CD4-positive, alpha-beta T cell (primary cell): ENCODE measurements at regions of chr3 and their contacts with region 1.

Region 1: GRCh38 chr3:47009225-47010110 is 30.0 kb downstream of the NBEAL2 start:
- DNase-seq: peak; percentile 30 to 85 (median 70)
- ATAC-seq: peak; percentile 88
- H3K4me3 ChIP-seq: peak overlapping the region; percentile 51
- H3K4me3 Mint-ChIP-seq: peak overlapping the region; percentile 71
- H3K27ac ChIP-seq: peak overlapping the region in 1 of 2 donors; percentile 50
- H3K27ac Mint-ChIP-seq: peak overlapping the region; percentile 59
- H3K4me1 ChIP-seq: peaks cover 10% of the 10 kb centered on the region
- H3K4me1 Mint-ChIP-seq: peaks cover 9% of the 10 kb centered on the region
- H3K27me3 ChIP-seq: no peaks in the 10 kb centered on the region
- H3K27me3 Mint-ChIP-seq: no peaks in the 10 kb centered on the region
- CTCF ChIP-seq: no peak

Region 2: DNA sequence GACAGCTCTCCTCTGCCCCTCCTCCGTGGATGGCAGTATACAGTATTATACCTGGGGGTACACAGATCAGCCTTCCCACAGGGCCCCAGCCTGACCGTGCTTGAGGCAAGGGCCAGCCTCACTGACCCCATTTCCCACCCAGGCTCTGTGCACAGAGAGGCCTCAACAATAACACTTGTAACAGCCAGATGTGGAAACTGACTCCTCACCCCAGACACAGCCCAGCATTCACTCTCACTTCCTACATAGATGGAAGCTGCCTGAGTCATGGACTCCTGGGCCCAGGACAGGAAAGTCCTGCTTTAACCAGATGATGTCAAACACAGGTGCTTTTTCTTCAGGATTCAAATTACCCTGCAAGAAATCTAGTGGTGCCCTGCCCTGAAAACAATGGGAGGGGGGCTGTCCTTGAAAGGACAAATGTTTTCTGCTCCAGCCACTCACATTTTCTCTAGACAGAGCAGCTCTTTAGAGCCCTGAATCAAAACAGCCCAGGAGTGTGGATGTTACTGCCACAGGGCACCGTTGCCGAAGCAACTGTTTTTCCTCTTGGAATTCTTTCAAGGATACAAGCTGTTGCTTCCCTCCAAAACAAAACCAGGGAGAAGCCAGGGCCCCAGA is 49.3 kb before region 1 on chr3:
- CTCF ChIA-PET with region 1: no interaction called
- POLR2A ChIA-PET with region 1: no interaction called
- intact Hi-C with region 1: loop called in 1 of 2 experiments (anchors 5 kb)
- DNase-seq: peak in 2 of 14 experiments; percentile 52
- ATAC-seq: no peak
- H3K4me3 ChIP-seq: no peak overlapping the region
- H3K4me3 Mint-ChIP-seq: peak overlapping the region; percentile 7
- H3K27ac ChIP-seq: no peak overlapping the region
- H3K27ac Mint-ChIP-seq: peak overlapping the region; percentile 78
- H3K4me1 ChIP-seq: peaks cover 59% of the 10 kb centered on the region
- H3K4me1 Mint-ChIP-seq: peaks cover 78% of the 10 kb centered on the region
- H3K27me3 ChIP-seq: no peaks in the 10 kb centered on the region
- H3K27me3 Mint-ChIP-seq: no peaks in the 10 kb centered on the region
- CTCF ChIP-seq: no peak

Region 3: GRCh38 chr3:46987743-46988401 is 21.6 kb before region 1 on chr3:
- CTCF ChIA-PET with region 1: no interaction called
- POLR2A ChIA-PET with region 1: interaction called, 9 read pairs
- intact Hi-C with region 1: loop called in 1 of 2 experiments (anchors 2 kb)
- DNase-seq: peak; percentile 79 to 96 (median 89)
- ATAC-seq: peak; percentile 98
- H3K4me3 ChIP-seq: peak overlapping the region; percentile 53
- H3K4me3 Mint-ChIP-seq: peak overlapping the region; percentile 87
- H3K27ac ChIP-seq: peak overlapping the region; percentile 59 to 64
- H3K27ac Mint-ChIP-seq: peak overlapping the region; percentile 93
- H3K4me1 ChIP-seq: peaks cover 86% of the 10 kb centered on the region
- H3K4me1 Mint-ChIP-seq: peaks cover 68% of the 10 kb centered on the region
- H3K27me3 ChIP-seq: no peaks in the 10 kb centered on the region
- H3K27me3 Mint-ChIP-seq: no peaks in the 10 kb centered on the region
- CTCF ChIP-seq: no peak